Activated CD4-positive, alpha-beta T cell treated with anti-CD3 and anti-CD28 coated beads for 36 hours (primary cell): ENCODE measurements at regions of chr6 and their contacts with region 1.

Region 1: GRCh38 chr6:104525677-104526312 is 333.9 kb downstream of the HACE1 start:
- DNase-seq: peak; percentile 83
- ATAC-seq: peak; percentile 98
- H3K4me3 Mint-ChIP-seq: peak overlapping the region; percentile 55
- H3K27ac Mint-ChIP-seq: no peak overlapping the region
- H3K4me1 Mint-ChIP-seq: peaks cover 5% of the 10 kb centered on the region
- H3K27me3 Mint-ChIP-seq: peaks cover 21% of the 10 kb centered on the region

Region 2: DNA sequence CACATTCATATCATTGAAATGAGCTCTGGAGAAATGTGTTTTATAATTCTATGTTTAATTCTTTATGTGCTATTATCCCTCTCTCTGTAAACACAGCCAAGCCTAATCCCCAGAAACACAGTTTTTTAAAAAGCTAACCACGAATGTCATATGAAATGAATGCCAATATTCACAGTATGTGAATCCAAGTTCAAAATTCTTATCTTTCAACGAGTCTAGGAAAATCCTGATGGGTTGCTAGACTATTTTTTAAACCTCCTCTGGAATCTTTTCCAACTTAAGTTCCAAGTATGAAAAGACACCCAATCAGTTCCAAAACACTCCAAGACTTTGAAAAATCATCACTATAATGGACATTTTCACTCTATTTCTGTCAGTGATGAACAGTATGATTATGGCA is 355.4 kb before region 1 on chr6:
- CTCF ChIA-PET with region 1: no interaction called
- POLR2A ChIA-PET with region 1: no interaction called
- intact Hi-C with region 1: no loop called
- DNase-seq: no peak
- ATAC-seq: no peak
- H3K4me3 Mint-ChIP-seq: no peak overlapping the region
- H3K27ac Mint-ChIP-seq: no peak overlapping the region
- H3K4me1 Mint-ChIP-seq: no peaks in the 10 kb centered on the region
- H3K27me3 Mint-ChIP-seq: no peaks in the 10 kb centered on the region

Region 3: GRCh38 chr6:104325341-104326172 is 200.2 kb before region 1 on chr6:
- CTCF ChIA-PET with region 1: no interaction called
- POLR2A ChIA-PET with region 1: no interaction called
- intact Hi-C with region 1: loop called (anchors 5 to 10 kb)
- DNase-seq: peak; percentile 12
- ATAC-seq: no peak
- H3K4me3 Mint-ChIP-seq: no peak overlapping the region
- H3K27ac Mint-ChIP-seq: no peak overlapping the region
- H3K4me1 Mint-ChIP-seq: no peaks in the 10 kb centered on the region
- H3K27me3 Mint-ChIP-seq: no peaks in the 10 kb centered on the region

Region 4: GRCh38 chr6:104566411-104566810 is 40.6 kb after region 1 on chr6:
- CTCF ChIA-PET with region 1: no interaction called
- POLR2A ChIA-PET with region 1: no interaction called
- intact Hi-C with region 1: no loop called
- DNase-seq: no peak
- ATAC-seq: no peak
- H3K4me3 Mint-ChIP-seq: no peak overlapping the region
- H3K27ac Mint-ChIP-seq: no peak overlapping the region
- H3K4me1 Mint-ChIP-seq: no peaks in the 10 kb centered on the region
- H3K27me3 Mint-ChIP-seq: no peaks in the 10 kb centered on the region